Activated T-helper 1 cell treated with anti-CD3 and anti-CD28 coated beads, Interleukin-12 subunit alpha, Interleukin-12 subunit beta, Interleukin-2, Interleukin-4 antibody, amounts not matched to agents 30 ng/mL and 10 ng/mL and 1 ng/mL, durations not matched to agents 14 hours and 24 hours and 36 hours (primary cell): ENCODE measurements at regions of chr15 and their contacts with region 1.

Region 1: DNA sequence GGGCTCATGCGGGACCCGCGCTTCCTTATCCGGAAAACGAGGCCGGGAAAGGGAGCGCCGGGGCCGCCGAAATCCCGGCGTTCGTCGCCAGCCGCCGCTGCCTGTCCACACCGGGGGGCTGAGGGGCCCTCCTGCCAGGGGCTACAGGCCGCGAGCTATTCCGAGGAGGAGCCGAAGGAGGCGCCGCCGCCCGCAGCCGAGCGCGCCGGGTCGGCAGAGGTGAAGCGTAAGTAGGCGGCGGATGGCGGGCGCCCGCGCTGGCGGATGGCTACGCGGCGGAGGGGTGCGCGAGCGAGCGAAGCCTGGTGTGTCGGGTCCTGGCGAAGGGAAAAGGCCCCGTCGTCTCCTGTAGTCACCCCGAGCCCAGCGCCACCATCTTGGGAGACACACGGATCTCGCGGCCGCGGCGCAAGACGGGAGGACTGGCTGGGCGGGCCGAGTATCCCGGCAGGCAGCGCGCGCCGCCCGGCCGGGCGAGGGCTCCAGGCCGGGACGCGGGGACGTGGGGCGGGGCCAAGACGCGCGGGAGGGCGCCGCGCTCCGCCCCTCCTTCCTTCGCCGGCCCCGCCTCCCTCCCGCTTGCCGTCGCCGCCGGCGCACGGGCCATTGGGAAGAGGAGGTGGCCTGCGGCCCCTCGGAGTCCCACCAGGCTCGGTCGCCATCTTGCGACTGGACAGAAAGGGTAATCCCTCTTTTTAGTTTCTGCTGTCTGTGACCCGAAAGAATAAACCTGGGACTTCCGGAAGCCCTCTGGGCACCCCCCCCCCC is at the start of gene UBE3A:
- DNase-seq: peak; percentile 86
- H3K4me3 Mint-ChIP-seq: peak within 1 kb of the TSS; percentile 90
- H3K27ac Mint-ChIP-seq: peak within 1 kb of the TSS; percentile 86
- H3K4me1 Mint-ChIP-seq: peaks cover 33% of the 10 kb centered on the region
- H3K27me3 Mint-ChIP-seq: no peaks in the 10 kb centered on the region
- total RNA-seq, gene UBE3A: 111 and 115 TPM in 2 replicates

Region 2: DNA sequence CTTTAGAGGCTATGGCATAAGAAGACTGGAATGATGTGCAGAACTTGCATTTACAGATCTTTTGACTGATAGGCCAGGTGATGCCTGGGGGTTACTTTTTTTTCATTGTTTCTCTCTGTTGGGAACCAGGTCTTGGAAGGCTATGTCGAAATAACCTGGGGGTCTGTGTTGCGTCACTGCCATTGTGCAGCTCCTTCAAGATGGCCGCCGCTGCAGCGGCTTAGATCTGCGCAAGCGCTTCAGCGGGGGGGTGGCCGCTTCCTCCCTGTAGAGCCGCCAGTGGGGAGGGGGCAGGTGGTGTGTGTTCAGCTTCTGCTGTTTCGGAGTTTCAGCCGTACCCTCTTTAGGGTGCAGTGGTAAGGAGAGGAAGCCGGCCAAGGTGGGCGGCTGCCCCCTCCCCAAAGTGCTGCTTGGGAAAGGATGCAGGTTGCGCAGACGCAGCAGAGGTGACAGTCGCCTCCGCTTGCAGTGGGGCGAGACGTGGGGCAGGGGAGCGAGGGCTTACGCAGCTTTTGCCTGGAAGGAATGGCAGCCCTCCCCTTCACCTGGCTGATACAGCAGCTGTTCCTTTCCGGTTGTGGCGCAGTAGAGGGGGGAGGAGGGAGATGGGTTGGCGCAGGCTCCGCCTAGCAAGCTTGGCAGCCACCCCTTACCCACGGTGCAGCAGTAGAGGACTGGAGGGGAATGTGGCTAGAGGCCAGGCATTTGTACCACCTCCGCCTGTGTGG is 482.5 kb before region 1 on chr15:
- intact Hi-C with region 1: loop called (anchors 1 kb)
- DNase-seq: peak; percentile 65
- H3K4me3 Mint-ChIP-seq: peak overlapping the region; percentile 95
- H3K27ac Mint-ChIP-seq: peak overlapping the region; percentile 92
- H3K4me1 Mint-ChIP-seq: peaks cover 10% of the 10 kb centered on the region
- H3K27me3 Mint-ChIP-seq: no peaks in the 10 kb centered on the region

Region 3: GRCh38 chr15:25366058-25366457 is 72.7 kb before region 1 on chr15:
- intact Hi-C with region 1: loop called (anchors 1 kb)
- DNase-seq: no peak
- H3K4me3 Mint-ChIP-seq: no peak overlapping the region
- H3K27ac Mint-ChIP-seq: no peak overlapping the region
- H3K4me1 Mint-ChIP-seq: peaks cover 16% of the 10 kb centered on the region
- H3K27me3 Mint-ChIP-seq: no peaks in the 10 kb centered on the region

Region 4: GRCh38 chr15:25863111-25863967 is 424.6 kb after region 1 on chr15 and contains the start of gene ATP10A:
- intact Hi-C with region 1: loop called (anchors 2 kb)
- DNase-seq: peak; percentile 68
- H3K4me3 Mint-ChIP-seq: peak within 1 kb of the TSS; percentile 95
- H3K27ac Mint-ChIP-seq: peak within 1 kb of the TSS; percentile 91
- H3K4me1 Mint-ChIP-seq: peaks cover 52% of the 10 kb centered on the region
- H3K27me3 Mint-ChIP-seq: peaks cover 9% of the 10 kb centered on the region
- total RNA-seq, gene ATP10A: 42.8 and 47.9 TPM in 2 replicates